ENCODE measurements at regions of chr5 and their contacts with region 1.

Region 1: GRCh38 chr5:141564216-141564692 is 54.5 kb downstream of the DIAPH1 start:
- DNase-seq: peak; percentile 84
- ATAC-seq: peak; percentile 99
- H3K4me3 ChIP-seq: no peak overlapping the region
- H3K27ac ChIP-seq: peak overlapping the region; percentile 62; the same call in 1 of the 2 replicates
- H3K4me1 ChIP-seq: no peaks in the 10 kb centered on the region
- H3K27me3 ChIP-seq: no peaks in the 10 kb centered on the region
- CTCF ChIP-seq: peak; percentile 64 to 97 (median 93)
- EP300 ChIP-seq: no peak
- POLR2A ChIP-seq: no peak
- RAD21 ChIP-seq: peak; percentile 66

Region 2: GRCh38 chr5:141186897-141187512 is 377.2 kb before region 1 on chr5 and contains the start of gene PCDHB9:
- CTCF ChIA-PET with region 1: no interaction called
- POLR2A ChIA-PET with region 1: no interaction called
- RAD21 ChIA-PET with region 1: interaction called, 6 read pairs
- SMC1A ChIA-PET with region 1: no interaction called
- in situ Hi-C with region 1: no loop called
- intact Hi-C with region 1: loop called (anchors 10 kb)
- DNase-seq: no peak
- ATAC-seq: no peak
- H3K4me3 ChIP-seq: no peak within 1 kb of the TSS
- H3K27ac ChIP-seq: no peak within 1 kb of the TSS
- H3K4me1 ChIP-seq: no peaks in the 10 kb centered on the region
- H3K27me3 ChIP-seq: no peaks in the 10 kb centered on the region
- CTCF ChIP-seq: peak in 2 of 3 experiments; percentile 22 to 32; a peak in 2 of 6 replicates
- EP300 ChIP-seq: no peak
- POLR2A ChIP-seq: no peak
- RAD21 ChIP-seq: no peak
- polyA plus RNA-seq, gene PCDHB9: not detected

Region 3: DNA sequence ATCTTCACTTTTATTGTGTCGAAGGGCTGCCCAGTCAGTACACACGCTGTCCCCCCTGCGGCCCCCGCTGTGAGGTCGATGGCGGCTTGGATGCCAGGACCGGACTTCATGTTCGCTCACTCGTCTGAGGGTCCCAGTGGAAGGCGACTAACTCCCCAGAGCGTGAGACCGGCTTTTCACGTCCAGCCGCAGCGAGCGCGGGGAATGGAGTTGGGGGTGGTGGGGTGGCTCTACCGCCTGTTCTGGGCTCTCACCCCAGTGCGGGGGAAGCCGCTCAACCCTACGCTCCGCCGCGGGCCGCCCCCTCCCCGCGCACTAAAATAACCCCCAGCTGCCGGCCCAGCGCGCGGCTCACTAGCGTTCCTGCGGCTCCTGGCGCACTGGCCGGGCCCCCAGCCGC is 260.5 kb before region 1 on chr5 and contains the start of gene SLC25A2:
- CTCF ChIA-PET with region 1: no interaction called
- POLR2A ChIA-PET with region 1: no interaction called
- RAD21 ChIA-PET with region 1: no interaction called
- SMC1A ChIA-PET with region 1: no interaction called
- in situ Hi-C with region 1: no loop called
- intact Hi-C with region 1: no loop called
- DNase-seq: no peak
- ATAC-seq: no peak
- H3K4me3 ChIP-seq: no peak within 1 kb of the TSS
- H3K27ac ChIP-seq: no peak within 1 kb of the TSS
- H3K4me1 ChIP-seq: no peaks in the 10 kb centered on the region
- H3K27me3 ChIP-seq: no peaks in the 10 kb centered on the region
- CTCF ChIP-seq: no peak
- EP300 ChIP-seq: no peak
- POLR2A ChIP-seq: no peak
- RAD21 ChIP-seq: no peak
- polyA plus RNA-seq, gene SLC25A2: not detected

Region 4: GRCh38 chr5:141369994-141370848 is 194.0 kb before region 1 on chr5 and contains the start of gene PCDHGB3:
- CTCF ChIA-PET with region 1: interaction called, 40 read pairs
- POLR2A ChIA-PET with region 1: no interaction called
- RAD21 ChIA-PET with region 1: interaction called, 24 read pairs
- SMC1A ChIA-PET with region 1: interaction called, 17 read pairs
- in situ Hi-C with region 1: no loop called
- intact Hi-C with region 1: no loop called
- DNase-seq: no peak
- ATAC-seq: peak; percentile 96
- H3K4me3 ChIP-seq: 0 out of 2 replicates have a peak within 1 kb of the TSS, but pooled peaks have one; percentile 18
- H3K27ac ChIP-seq: no peak within 1 kb of the TSS
- H3K4me1 ChIP-seq: no peaks in the 10 kb centered on the region
- H3K27me3 ChIP-seq: no peaks in the 10 kb centered on the region; a peak in 1 of 4 replicates
- CTCF ChIP-seq: peak; percentile 38 to 72 (median 43)
- EP300 ChIP-seq: no peak
- POLR2A ChIP-seq: no peak
- RAD21 ChIP-seq: 0 out of 2 replicates have a peak, but pooled peaks have one; percentile 1
- polyA plus RNA-seq, gene PCDHGB3: not detected

Region 5: DNA sequence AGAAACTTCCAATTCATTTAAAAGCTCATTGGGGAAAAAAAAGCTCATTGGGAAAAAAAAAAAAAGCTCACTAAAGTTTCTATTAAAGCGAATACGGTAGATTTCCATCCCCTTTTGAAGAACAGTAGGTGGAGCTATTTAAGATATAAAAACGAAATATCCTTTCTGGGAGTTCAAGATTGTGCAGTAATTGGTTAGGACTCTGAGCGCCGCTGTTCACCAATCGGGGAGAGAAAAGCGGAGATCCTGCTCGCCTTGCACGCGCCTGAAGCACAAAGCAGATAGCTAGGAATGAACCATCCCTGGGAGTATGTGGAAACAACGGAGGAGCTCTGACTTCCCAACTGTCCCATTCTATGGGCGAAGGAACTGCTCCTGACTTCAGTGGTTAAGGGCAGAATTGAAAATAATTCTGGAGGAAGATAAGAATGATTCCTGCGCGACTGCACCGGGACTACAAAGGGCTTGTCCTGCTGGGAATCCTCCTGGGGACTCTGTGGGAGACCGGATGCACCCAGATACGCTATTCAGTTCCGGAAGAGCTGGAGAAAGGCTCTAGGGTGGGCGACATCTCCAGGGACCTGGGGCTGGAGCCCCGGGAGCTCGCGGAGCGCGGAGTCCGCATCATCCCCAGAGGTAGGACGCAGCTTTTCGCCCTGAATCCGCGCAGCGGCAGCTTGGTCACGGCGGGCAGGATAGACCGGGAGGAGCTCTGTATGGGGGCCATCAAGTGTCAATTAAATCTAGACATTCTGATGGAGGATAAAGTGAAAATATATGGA is 133.7 kb before region 1 on chr5 and contains the start of gene PCDHGA12:
- CTCF ChIA-PET with region 1: interaction called, 46 read pairs
- POLR2A ChIA-PET with region 1: no interaction called
- RAD21 ChIA-PET with region 1: interaction called, 21 read pairs
- SMC1A ChIA-PET with region 1: interaction called, 20 read pairs
- in situ Hi-C with region 1: no loop called
- intact Hi-C with region 1: no loop called
- DNase-seq: peak; percentile 37
- ATAC-seq: peak; percentile 96
- H3K4me3 ChIP-seq: peak within 1 kb of the TSS; percentile 22; the same call in 1 of the 2 replicates
- H3K27ac ChIP-seq: no peak within 1 kb of the TSS
- H3K4me1 ChIP-seq: no peaks in the 10 kb centered on the region; the same call in 1 of the 2 replicates
- H3K27me3 ChIP-seq: no peaks in the 10 kb centered on the region
- CTCF ChIP-seq: peak; percentile 62 to 82 (median 68)
- EP300 ChIP-seq: no peak
- POLR2A ChIP-seq: no peak
- RAD21 ChIP-seq: peak; percentile 56
- polyA plus RNA-seq, gene PCDHGA12: not detected

Region 6: DNA sequence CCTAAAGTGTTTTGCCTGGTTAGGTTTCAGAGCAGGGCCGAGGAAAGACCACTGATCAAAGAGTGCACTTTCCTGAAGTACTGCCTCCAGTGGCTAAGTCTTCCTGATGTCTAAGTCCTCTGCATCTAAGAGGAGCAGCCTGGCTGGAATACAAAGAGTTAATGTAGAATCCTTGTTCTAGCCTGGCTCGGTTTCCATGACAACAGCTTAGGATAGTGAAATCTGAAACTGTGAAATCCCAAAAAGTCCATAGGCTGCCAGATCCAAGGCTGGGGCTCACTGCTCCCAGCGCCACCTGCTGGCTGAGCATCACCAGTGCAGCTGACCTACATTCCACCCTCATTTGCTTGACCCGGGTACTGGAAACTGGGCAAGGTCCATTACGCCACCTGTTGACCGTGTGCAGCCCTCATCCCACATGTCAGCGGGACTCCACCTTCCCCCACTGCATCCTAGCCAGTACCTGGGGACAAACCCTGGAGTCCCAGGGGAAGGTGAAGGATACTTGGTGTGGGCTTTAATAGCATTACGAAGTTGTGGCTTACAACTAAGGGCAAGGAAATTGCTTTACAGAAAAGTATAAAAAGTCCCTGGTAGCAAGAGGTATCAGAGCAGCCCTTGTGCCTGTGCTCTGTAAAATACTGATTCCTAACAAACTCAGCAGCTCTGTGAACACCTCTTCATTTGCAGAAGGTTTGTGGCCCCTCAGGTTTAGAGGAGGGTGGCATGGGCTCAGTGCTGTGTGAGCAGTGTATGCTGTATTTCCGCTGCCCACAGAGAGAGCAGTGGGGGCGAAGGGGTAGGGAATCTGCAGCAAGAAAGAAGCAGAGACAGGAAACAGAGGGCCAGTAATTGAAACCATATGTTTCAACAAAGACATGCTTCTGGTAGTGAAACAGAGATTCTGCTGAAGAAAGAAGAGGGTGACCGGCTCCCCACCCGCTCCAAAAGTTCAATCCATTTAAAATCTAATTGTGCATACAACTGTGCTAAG is 39.4 kb before region 1 on chr5:
- CTCF ChIA-PET with region 1: interaction called, 65 read pairs
- POLR2A ChIA-PET with region 1: no interaction called
- RAD21 ChIA-PET with region 1: interaction called, 8 read pairs
- SMC1A ChIA-PET with region 1: interaction called, 11 read pairs
- in situ Hi-C with region 1: no loop called
- intact Hi-C with region 1: no loop called
- DNase-seq: no peak
- ATAC-seq: peak; percentile 91
- H3K4me3 ChIP-seq: no peak overlapping the region
- H3K27ac ChIP-seq: peak overlapping the region; percentile 9; the same call in 1 of the 2 replicates
- H3K4me1 ChIP-seq: peaks cover 26% of the 10 kb centered on the region
- H3K27me3 ChIP-seq: no peaks in the 10 kb centered on the region
- CTCF ChIP-seq: peak; percentile 98 to 100 (median 99)
- EP300 ChIP-seq: 0 out of 4 replicates have a peak, but pooled peaks of 1 of the 2 experiments have one; percentile 38
- POLR2A ChIP-seq: 0 out of 2 replicates have a peak, but pooled peaks have one; percentile 34
- RAD21 ChIP-seq: peak; percentile 73

Region 7: GRCh38 chr5:141605523-141606277 is 41.4 kb after region 1 on chr5:
- CTCF ChIA-PET with region 1: interaction called, 10 read pairs
- POLR2A ChIA-PET with region 1: no interaction called
- RAD21 ChIA-PET with region 1: no interaction called
- SMC1A ChIA-PET with region 1: interaction called, 5 read pairs
- in situ Hi-C with region 1: no loop called
- intact Hi-C with region 1: no loop called
- DNase-seq: peak; percentile 87
- ATAC-seq: peak; percentile 94
- H3K4me3 ChIP-seq: peak overlapping the region; percentile 23
- H3K27ac ChIP-seq: peak overlapping the region; percentile 77
- H3K4me1 ChIP-seq: peaks cover 34% of the 10 kb centered on the region
- H3K27me3 ChIP-seq: no peaks in the 10 kb centered on the region
- CTCF ChIP-seq: no peak
- EP300 ChIP-seq: peak; percentile 58 to 81
- POLR2A ChIP-seq: no peak
- RAD21 ChIP-seq: 0 out of 2 replicates have a peak, but pooled peaks have one; percentile 7